Colonic mucosa (tissue), 4 donors: ENCODE measurements at regions of chr17 and their contacts with region 1.

Region 1: DNA sequence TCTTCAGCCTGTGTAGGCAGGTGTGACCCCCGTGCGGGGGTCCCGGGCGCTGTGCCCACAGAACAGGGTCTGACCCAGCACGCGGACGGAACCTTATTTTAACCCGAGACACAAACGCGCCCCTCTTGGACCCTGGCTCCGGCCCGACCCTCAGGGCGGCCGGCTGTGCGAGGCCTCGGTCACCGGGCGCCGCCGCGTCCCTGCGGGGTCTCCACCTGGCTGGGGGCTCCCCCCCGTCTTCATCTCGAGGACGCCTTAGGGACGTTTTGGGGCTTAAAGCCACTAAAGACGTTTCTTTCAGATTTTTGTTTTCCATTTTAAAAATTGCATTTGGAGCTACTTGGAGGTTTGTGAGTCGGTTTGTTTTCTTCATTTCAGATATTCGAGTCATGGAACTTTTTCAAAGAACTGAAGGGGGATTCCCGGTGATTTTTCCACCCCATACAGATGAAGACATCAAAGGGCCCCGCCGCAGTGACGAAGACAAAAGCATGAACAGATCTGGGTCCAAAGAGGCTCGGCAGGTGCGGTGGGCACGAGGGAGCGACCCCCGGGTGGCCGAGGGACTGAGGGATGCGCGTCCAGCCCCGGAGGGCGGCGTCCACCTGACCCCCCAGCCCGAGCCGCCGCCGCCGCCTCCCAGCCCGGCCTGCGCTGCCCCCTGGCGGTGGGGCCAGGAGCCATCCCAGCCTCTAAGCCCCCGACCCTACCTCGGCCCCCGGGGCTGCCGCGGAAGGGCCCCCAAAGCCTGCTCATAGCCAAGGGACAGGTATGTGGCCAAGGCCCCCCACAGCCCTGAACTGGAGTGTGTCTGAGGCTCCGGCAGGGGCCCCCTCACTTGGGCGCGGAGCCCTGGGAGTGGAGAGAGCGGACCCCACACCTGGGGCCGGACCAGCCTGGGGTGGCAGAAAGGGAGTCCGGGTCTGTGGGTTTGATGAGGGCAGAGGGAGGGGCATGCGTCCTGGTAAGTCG is 3.8 kb upstream of the CD7 start:
- DNase-seq: no peak
- H3K4me3 ChIP-seq: peak overlapping the region; percentile 5
- H3K27ac ChIP-seq: no peak overlapping the region
- H3K4me1 ChIP-seq: peaks cover 10% of the 10 kb centered on the region
- H3K27me3 ChIP-seq: no peaks in the 10 kb centered on the region
- CTCF ChIP-seq: peak; percentile 89

Region 2: DNA sequence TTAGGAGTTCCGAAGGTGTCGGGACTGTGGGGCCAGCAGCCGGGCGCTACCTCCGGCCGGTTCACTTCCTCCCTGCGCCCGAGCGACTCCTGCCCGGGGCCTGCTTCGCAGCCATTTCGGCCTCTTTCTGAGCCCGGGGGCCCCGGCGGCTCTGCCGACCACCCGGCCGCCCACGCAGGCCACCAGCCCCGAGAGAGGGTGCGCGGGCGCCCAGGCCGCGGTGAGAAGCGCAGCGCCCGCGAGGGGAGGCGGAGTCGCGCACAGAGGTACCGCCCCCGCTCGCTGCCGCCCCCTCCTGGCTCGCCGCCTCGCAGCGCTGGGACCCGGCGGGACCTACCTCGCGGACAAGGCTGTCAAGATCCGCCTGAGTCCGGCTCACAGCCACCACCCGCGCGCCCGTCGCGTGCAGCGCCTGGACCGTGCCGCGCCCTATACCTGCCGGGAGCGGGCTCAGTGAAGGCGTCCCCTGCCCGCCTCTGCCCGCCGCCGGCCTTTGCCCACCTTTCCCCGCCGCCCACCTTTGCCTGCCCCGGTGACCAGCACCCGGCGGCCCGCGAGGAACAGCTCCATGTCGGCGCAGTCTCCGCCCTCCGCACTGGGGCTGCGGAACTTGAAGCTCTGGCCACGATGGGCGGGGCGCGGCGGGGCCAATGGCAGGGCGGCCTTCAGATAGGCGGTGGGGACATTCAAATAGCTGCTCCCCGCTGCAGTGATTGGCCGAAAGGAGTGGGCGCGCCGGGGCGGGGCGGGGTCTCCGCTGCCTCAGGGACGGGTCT is 283.9 kb before region 1 on chr17 and contains the start of gene DCXR:
- intact Hi-C with region 1: loop called (anchors 10 kb)
- DNase-seq: peak; percentile 99
- H3K4me3 ChIP-seq: peak within 1 kb of the TSS; percentile 83
- H3K27ac ChIP-seq: peak within 1 kb of the TSS; percentile 95
- H3K4me1 ChIP-seq: peaks cover 10% of the 10 kb centered on the region
- H3K27me3 ChIP-seq: no peaks in the 10 kb centered on the region
- CTCF ChIP-seq: peak; percentile 80
- total RNA-seq, gene DCXR: 115 to 183 TPM

Region 3: DNA sequence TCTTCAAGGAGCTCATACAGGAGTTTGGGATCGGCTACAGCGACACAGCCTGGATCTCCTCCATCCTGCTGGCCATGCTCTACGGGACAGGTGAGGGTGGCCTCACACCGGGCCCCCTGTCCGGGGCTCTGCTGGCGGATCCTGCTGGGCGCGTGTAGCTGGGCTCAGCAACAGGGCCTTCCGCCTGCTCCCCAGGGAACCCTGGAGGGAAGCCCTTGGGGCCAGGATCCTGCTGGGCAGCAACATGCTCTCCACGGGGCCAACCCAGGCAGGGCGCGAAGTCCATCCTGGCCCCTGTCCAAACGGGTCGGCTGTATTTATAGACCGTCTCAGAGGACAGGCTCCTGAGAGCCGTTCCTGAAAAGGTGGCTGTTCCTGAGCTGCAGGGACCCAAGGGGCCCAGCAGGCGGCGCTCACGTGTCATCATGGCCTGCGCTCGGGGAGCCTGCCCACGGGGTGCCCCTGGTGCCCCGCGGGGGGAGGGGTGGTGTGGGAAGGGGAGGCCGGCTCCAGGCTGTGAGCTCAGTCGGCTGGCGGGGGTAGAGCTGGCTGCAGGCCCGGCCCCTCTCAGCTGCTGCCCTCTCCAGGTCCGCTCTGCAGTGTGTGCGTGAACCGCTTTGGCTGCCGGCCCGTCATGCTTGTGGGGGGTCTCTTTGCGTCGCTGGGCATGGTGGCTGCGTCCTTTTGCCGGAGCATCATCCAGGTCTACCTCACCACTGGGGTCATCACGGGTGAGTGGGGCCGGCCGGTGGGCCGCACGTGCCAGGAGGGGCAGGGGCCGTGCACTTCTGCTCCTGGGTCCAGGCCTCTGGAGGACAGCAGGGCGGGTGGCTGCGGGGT is 84.9 kb before region 1 on chr17:
- intact Hi-C with region 1: loop called (anchors 2 kb)
- DNase-seq: peak; percentile 78
- H3K4me3 ChIP-seq: no peak overlapping the region
- H3K27ac ChIP-seq: no peak overlapping the region
- H3K4me1 ChIP-seq: peaks cover 52% of the 10 kb centered on the region
- H3K27me3 ChIP-seq: no peaks in the 10 kb centered on the region
- CTCF ChIP-seq: peak; percentile 76

Region 4: GRCh38 chr17:82244413-82245140 is 76.7 kb before region 1 on chr17:
- intact Hi-C with region 1: loop called (anchors 2 kb)
- DNase-seq: no peak
- H3K4me3 ChIP-seq: no peak overlapping the region
- H3K27ac ChIP-seq: no peak overlapping the region
- H3K4me1 ChIP-seq: peaks cover 38% of the 10 kb centered on the region
- H3K27me3 ChIP-seq: no peaks in the 10 kb centered on the region
- CTCF ChIP-seq: peak; percentile 36